ENCODE measurements at regions of chr18 and their contacts with region 1.

Region 1: GRCh38 chr18:61785588-61785987 is 107.2 kb downstream of the RNF152 start:
- DNase-seq: no peak
- ATAC-seq: no peak
- H3K4me3 ChIP-seq: no peak overlapping the region
- H3K27ac ChIP-seq: no peak overlapping the region
- H3K4me1 ChIP-seq: no peaks in the 10 kb centered on the region
- H3K27me3 ChIP-seq: no peaks in the 10 kb centered on the region
- CTCF ChIP-seq: no peak
- EP300 ChIP-seq: no peak
- POLR2A ChIP-seq: no peak
- RAD21 ChIP-seq: no peak

Region 2: GRCh38 chr18:61774846-61775245 is 10.7 kb before region 1 on chr18:
- CTCF ChIA-PET with region 1: no interaction called
- POLR2A ChIA-PET with region 1: no interaction called
- RAD21 ChIA-PET with region 1: no interaction called
- SMC1A ChIA-PET with region 1: interaction called, 3 read pairs
- in situ Hi-C with region 1: no loop called
- intact Hi-C with region 1: loop called (anchors 1 kb)
- DNase-seq: no peak
- ATAC-seq: no peak
- H3K4me3 ChIP-seq: no peak overlapping the region
- H3K27ac ChIP-seq: no peak overlapping the region
- H3K4me1 ChIP-seq: no peaks in the 10 kb centered on the region
- H3K27me3 ChIP-seq: no peaks in the 10 kb centered on the region
- CTCF ChIP-seq: no peak
- EP300 ChIP-seq: no peak
- POLR2A ChIP-seq: no peak
- RAD21 ChIP-seq: no peak